PC-3 (cell line): ENCODE measurements at regions of chr21 and their contacts with region 1.

Region 1: GRCh38 chr21:46097336-46098293 is at the start of gene COL6A2:
- DNase-seq: peak; percentile 75
- ATAC-seq: peak; percentile 85
- H3K4me3 ChIP-seq: peak within 1 kb of the TSS; percentile 86
- H3K27ac ChIP-seq: peak within 1 kb of the TSS; percentile 70
- H3K4me1 ChIP-seq: peaks cover 20% of the 10 kb centered on the region
- H3K27me3 ChIP-seq: no peaks in the 10 kb centered on the region
- CTCF ChIP-seq: no peak; the same call in 1 of the 2 replicates
- total RNA-seq, gene COL6A2: 521 and 654 TPM in 2 replicates

Region 2: GRCh38 chr21:45513008-45513702 is 584.5 kb before region 1 on chr21:
- CTCF ChIA-PET with region 1: no interaction called
- POLR2A ChIA-PET with region 1: no interaction called
- intact Hi-C with region 1: no loop called
- DNase-seq: peak; percentile 94
- ATAC-seq: peak; percentile 69
- H3K4me3 ChIP-seq: no peak overlapping the region
- H3K27ac ChIP-seq: peak overlapping the region; percentile 76
- H3K4me1 ChIP-seq: peaks cover 34% of the 10 kb centered on the region
- H3K27me3 ChIP-seq: no peaks in the 10 kb centered on the region
- CTCF ChIP-seq: no peak

Region 3: DNA sequence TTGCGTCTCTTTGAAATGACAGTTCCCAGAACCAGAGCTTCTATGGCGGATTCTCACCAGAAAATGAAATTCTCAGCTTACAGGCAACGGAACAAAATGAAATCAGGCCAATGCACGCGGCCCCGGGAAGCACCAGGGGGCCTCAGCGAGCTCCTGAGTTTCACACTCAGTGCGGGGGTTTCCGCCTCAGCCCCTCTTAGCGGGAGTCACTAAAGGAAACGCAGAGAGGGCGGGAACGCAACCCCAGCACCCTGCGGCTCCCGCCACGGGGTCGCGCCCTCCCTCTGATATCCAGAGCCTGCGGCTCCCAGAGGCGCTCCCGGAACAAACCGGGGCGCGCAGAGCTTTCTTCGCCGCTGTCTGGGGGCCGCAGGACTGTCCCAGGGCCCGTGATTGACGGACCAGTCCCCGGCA is 123.9 kb before region 1 on chr21:
- CTCF ChIA-PET with region 1: interaction called, 10 read pairs
- POLR2A ChIA-PET with region 1: interaction called, 3 read pairs
- intact Hi-C with region 1: loop called (anchors 1 kb)
- DNase-seq: peak; percentile 86
- ATAC-seq: peak; percentile 25
- H3K4me3 ChIP-seq: peak overlapping the region; percentile 64
- H3K27ac ChIP-seq: peak overlapping the region; percentile 93
- H3K4me1 ChIP-seq: peaks cover 34% of the 10 kb centered on the region
- H3K27me3 ChIP-seq: no peaks in the 10 kb centered on the region
- CTCF ChIP-seq: peak; percentile 88

Region 4: GRCh38 chr21:45981151-45982089 is 116.2 kb before region 1 on chr21 and contains the start of gene COL6A1:
- CTCF ChIA-PET with region 1: no interaction called
- POLR2A ChIA-PET with region 1: no interaction called
- intact Hi-C with region 1: loop called (anchors 2 kb)
- DNase-seq: peak; percentile 66
- ATAC-seq: peak; percentile 37
- H3K4me3 ChIP-seq: peak within 1 kb of the TSS; percentile 88
- H3K27ac ChIP-seq: peak within 1 kb of the TSS; percentile 84
- H3K4me1 ChIP-seq: peaks cover 44% of the 10 kb centered on the region
- H3K27me3 ChIP-seq: no peaks in the 10 kb centered on the region
- CTCF ChIP-seq: no peak
- total RNA-seq, gene COL6A1: 487 and 628 TPM in 2 replicates

Region 5: GRCh38 chr21:46060596-46061061 is 37.0 kb before region 1 on chr21:
- CTCF ChIA-PET with region 1: no interaction called
- POLR2A ChIA-PET with region 1: interaction called, 4 read pairs
- intact Hi-C with region 1: loop called (anchors 5 kb)
- DNase-seq: peak; percentile 99
- ATAC-seq: peak; percentile 84
- H3K4me3 ChIP-seq: 0 out of 2 replicates have a peak overlapping the region, but pooled peaks have one; percentile 2
- H3K27ac ChIP-seq: peak overlapping the region; percentile 97
- H3K4me1 ChIP-seq: peaks cover 29% of the 10 kb centered on the region
- H3K27me3 ChIP-seq: no peaks in the 10 kb centered on the region
- CTCF ChIP-seq: no peak

Region 6: DNA sequence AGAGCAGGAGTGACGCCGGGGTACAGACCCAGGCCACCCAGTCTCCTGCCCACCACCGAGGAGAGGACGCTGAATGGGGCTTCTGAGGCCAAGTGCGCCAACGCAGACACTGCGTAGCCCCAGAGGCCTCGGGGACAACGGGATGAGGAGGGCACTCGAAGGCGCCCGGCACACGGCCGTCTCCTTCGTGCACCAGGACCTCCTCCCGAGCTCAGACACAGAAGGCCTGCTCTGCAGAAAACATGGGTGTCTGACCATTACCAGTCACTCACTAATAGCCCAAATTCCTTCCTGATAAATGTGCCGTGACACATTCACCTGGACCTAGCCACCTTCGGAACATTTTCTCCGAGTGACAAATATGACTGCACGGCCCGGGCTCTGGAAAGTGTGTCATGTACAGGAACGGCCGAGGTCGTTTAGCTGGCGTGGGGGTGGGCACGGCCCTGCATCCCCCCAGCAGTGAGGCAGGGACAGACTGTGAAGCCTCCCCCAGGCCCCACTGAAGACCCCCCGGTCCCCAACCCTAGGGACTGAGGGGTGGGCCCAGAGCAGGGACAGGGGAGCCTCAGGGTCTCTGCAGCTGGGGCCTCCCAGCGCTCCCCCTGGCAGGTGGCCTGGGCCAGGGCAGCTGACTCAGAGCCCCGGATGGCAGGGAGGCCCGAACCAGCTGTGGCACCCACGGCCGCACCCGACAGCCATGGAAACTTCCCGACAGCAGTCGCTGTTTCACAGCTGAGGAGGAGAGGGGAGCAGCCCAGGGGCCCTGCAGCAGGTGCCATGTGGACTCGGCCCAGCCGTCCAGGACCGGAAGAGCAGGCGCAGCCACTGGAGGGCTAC is 16.4 kb before region 1 on chr21:
- CTCF ChIA-PET with region 1: no interaction called
- POLR2A ChIA-PET with region 1: interaction called, 10 read pairs
- intact Hi-C with region 1: no loop called
- DNase-seq: peak; percentile 55
- ATAC-seq: peak; percentile 67
- H3K4me3 ChIP-seq: no peak overlapping the region
- H3K27ac ChIP-seq: peak overlapping the region; percentile 81
- H3K4me1 ChIP-seq: peaks cover 21% of the 10 kb centered on the region
- H3K27me3 ChIP-seq: no peaks in the 10 kb centered on the region
- CTCF ChIP-seq: no peak